Gastrocnemius medialis (tissue), 4 donors: ENCODE measurements at regions of chr13 and their contacts with region 1.

Region 1: GRCh38 chr13:26985285-26985878 is 186.2 kb downstream of the USP12 start:
- DNase-seq: peak; percentile 36 to 54
- ATAC-seq: peak; percentile 80 to 91
- H3K4me3 ChIP-seq: no peak overlapping the region
- H3K27ac ChIP-seq: no peak overlapping the region
- H3K4me1 ChIP-seq: no peaks in the 10 kb centered on the region
- H3K27me3 ChIP-seq: peaks cover 0 to 4% (median 0%) of the 10 kb centered on the region in 3 donors
- CTCF ChIP-seq: peak; percentile 76 to 84 (median 78)
- POLR2A ChIP-seq: no peak

Region 2: DNA sequence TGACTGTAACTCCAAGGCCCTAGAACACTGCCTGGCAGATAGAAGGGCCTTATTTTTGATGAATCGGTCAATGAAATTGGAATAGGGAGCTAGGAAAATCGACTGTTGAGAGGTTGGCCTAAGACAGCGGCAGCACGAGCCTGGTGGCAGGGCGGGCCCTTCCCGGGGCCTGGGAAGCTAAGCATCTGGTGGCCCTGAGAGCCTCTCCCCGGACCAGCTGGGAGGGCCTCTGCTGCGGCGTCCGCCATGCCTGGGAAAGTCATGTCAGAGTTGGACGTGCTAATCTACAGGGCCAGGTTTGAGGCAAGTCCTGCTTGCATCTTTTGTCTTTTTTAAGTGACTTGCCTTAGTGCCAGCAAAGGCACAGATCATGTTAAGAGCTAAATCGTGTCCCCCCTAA is 213.6 kb before region 1 on chr13:
- in situ Hi-C with region 1: no loop called
- intact Hi-C with region 1: no loop called
- DNase-seq: no peak
- ATAC-seq: no peak
- H3K4me3 ChIP-seq: no peak overlapping the region
- H3K27ac ChIP-seq: no peak overlapping the region
- H3K4me1 ChIP-seq: no peaks in the 10 kb centered on the region
- H3K27me3 ChIP-seq: no peaks in the 10 kb centered on the region
- CTCF ChIP-seq: no peak
- POLR2A ChIP-seq: no peak

Region 3: GRCh38 chr13:27194895-27195764 is 209.7 kb after region 1 on chr13:
- in situ Hi-C with region 1: loop called in 3 of 4 experiments (anchors 10 to 25 kb)
- intact Hi-C with region 1: no loop called
- DNase-seq: no peak
- ATAC-seq: no peak
- H3K4me3 ChIP-seq: no peak overlapping the region
- H3K27ac ChIP-seq: no peak overlapping the region
- H3K4me1 ChIP-seq: no peaks in the 10 kb centered on the region
- H3K27me3 ChIP-seq: peaks cover 0 to 8% (median 0%) of the 10 kb centered on the region in 3 donors
- CTCF ChIP-seq: no peak
- POLR2A ChIP-seq: no peak

Region 4: GRCh38 chr13:27270594-27271520 is 285.5 kb after region 1 on chr13 and contains the start of gene RASL11A:
- in situ Hi-C with region 1: no loop called
- intact Hi-C with region 1: loop called (anchors 5 kb)
- DNase-seq: peak; percentile 57 to 71
- ATAC-seq: peak; percentile 86 to 90
- H3K4me3 ChIP-seq: peak within 1 kb of the TSS; percentile 65 to 91 (median 74)
- H3K27ac ChIP-seq: peak within 1 kb of the TSS; percentile 75 to 86 (median 84)
- H3K4me1 ChIP-seq: peaks cover 4 to 6% of the 10 kb centered on the region in 2 donors
- H3K27me3 ChIP-seq: no peaks in the 10 kb centered on the region
- CTCF ChIP-seq: peak; percentile 84 to 96 (median 87)
- POLR2A ChIP-seq: peak; percentile 61 to 87
- total RNA-seq, gene RASL11A: 2.8 to 9.0 (median 5.7) TPM

Region 5: DNA sequence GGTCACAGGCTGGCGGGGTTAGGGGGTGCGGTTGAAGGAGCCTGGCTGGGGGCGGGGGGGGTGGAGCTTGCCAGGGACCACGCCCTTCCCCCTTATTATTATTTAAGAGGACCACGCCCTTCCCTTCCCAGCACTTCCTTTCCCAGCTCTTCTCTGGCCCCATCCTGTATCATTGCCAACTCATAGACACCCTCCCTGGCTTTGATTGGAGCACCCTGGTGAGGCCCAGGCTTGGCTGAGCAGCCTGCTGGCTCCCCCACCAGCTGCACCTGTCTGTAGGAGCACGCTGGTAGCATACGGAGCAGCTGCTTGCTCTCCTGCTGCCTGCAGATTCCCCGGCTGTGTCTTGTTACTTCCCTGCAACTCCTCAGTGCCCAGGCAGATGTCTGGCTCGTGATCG is 871.9 kb after region 1 on chr13:
- in situ Hi-C with region 1: no loop called
- intact Hi-C with region 1: no loop called
- DNase-seq: no peak
- ATAC-seq: no peak
- H3K4me3 ChIP-seq: no peak overlapping the region
- H3K27ac ChIP-seq: no peak overlapping the region
- H3K4me1 ChIP-seq: no peaks in the 10 kb centered on the region
- H3K27me3 ChIP-seq: peaks cover 0 to 30% (median 0%) of the 10 kb centered on the region in 3 donors
- CTCF ChIP-seq: no peak
- POLR2A ChIP-seq: no peak

Region 6: GRCh38 chr13:27977476-27978300 is 992.3 kb after region 1 on chr13:
- in situ Hi-C with region 1: loop called in 3 of 4 experiments (anchors 10 to 25 kb)
- intact Hi-C with region 1: loop called (anchors 10 kb)
- DNase-seq: no peak
- ATAC-seq: no peak
- H3K4me3 ChIP-seq: no peak overlapping the region
- H3K27ac ChIP-seq: no peak overlapping the region
- H3K4me1 ChIP-seq: peaks cover 7 to 10% of the 10 kb centered on the region in 2 donors
- H3K27me3 ChIP-seq: peaks cover 86 to 93% (median 92%) of the 10 kb centered on the region in 3 donors
- CTCF ChIP-seq: no peak
- POLR2A ChIP-seq: no peak